ENCODE measurements at regions of chr1 and their contacts with region 1.

Region 1: DNA sequence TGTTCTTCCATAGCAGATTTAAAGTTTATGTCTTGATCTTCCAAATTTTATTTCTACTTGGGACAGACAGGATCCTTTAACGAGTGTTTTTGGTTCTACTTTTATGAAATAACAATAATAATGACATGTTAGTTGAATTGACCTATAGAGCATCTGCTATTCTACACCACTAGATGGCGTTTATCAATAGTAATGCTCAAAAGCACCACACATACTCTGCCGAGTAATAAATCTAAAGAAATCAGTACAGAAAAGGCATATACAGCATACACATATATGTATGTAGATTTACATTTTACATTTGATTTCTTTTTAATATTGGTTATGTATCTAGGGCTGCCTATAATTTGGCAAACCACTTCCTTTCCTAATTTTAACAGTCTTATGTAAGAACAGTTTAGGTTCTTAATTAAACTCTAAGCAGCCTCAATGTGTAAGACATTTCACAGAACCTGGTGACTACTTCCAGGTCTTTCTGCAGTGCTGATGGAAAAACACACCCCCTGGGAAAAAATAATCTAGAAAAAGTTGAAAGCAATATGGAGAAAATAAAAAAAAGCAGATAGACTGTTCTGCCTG is 5.9 kb upstream of the SIPA1L2 start:
- DNase-seq: no peak

Region 2: GRCh38 chr1:232655028-232655747 is 19.3 kb after region 1 on chr1:
- intact Hi-C with region 1: no loop called
- DNase-seq: no peak

Region 3: GRCh38 chr1:233172227-233172626 is 536.4 kb after region 1 on chr1:
- intact Hi-C with region 1: loop called (anchors 5 kb)
- DNase-seq: no peak

Region 4: DNA sequence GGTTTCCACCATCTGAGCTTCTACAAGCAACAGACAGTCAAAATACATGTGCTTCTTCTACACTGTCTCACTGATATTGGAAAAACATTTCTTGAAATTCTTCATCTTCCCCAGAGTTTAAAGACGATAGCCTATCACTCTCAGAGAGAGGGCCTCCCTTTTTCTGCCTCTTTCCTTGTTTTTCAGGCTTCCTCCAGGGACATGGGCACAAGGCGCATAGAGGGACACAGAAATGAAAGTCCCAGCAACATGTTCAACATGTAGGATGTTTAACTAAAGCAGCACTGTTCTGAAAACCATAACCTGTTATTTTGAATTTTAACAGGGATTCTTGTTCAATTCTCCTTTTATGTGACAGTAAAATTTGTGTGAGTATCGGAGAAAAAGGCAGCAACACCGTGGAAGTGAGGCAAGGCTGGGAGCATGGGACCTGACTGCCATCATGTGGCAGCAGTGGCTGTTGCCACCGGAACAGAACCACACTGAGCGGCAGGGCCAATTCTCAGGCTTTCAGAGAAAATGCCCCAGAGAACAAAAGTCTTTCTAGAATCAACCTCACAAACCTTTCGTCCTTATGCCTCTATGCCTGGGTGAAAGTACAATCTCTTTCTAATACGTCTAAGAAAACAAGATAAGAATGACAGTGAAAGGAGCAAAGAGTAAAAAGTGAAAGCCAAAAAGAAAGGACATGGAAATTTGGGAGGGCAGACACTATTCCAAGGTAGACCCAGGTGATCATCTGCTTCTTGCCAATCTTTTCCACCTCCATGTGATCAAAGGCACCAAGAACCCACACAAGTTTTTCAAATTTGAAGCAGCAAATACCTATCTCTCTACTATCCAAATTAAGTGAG is 605.2 kb after region 1 on chr1:
- intact Hi-C with region 1: loop called (anchors 1 kb)
- DNase-seq: peak; percentile 56 to 95 (median 75)

Region 5: GRCh38 chr1:233394860-233395717 is 759.2 kb after region 1 on chr1:
- intact Hi-C with region 1: no loop called
- DNase-seq: no peak